Caco-2 (cell line): ENCODE measurements at regions of chr16 and their contacts with region 1.

Region 1: DNA sequence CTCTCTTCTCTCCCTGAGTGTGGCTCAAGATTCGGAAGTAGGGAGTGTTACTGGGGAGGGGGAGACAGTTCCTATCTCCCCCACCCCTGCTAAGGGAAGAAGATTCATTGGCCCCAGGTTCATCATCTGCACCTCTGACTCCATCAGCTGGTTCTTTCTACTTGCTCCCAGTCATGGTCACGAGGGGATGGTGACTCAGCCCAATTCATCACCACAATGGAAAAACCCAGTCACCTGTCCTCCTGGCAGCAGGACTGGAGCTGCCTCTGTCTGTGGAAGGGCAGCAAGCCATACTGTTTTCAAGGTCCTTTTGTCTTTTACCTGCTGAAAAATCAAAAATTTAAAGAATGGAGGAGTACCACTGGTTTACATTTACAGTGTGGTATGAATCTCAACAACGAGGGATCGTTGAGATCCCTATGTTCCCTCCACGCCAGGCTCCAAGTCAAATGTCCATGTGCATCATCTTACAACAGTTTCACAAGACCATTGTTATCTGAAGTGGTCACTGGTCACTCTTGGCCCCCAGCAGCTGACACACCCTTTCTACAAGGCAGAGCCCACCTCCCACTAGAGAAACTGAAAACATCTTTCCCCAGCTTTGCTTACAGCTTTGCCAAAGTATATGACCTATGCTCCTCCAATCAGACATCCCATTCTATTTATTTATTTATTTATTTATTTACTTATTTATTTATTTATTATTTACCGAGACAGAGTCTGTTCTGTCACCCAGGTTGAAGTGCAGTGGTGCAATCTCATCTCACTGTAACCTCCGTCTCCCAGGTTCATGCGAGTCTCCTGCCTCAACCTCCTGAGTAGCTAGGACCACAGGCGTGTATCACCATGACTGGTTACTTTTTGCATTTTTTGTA is 40.4 kb upstream of the NDRG4 start:
- DNase-seq: no peak
- H3K4me3 ChIP-seq: no peak overlapping the region
- H3K4me3 Mint-ChIP-seq: no peak overlapping the region
- H3K27ac Mint-ChIP-seq: no peak overlapping the region
- H3K4me1 ChIP-seq: peaks cover 29% of the 10 kb centered on the region
- H3K4me1 Mint-ChIP-seq: peaks cover 9% of the 10 kb centered on the region
- H3K27me3 ChIP-seq: no peaks in the 10 kb centered on the region; the same call in 1 of the 2 replicates
- H3K27me3 Mint-ChIP-seq: peaks cover 4% of the 10 kb centered on the region
- CTCF ChIP-seq: no peak

Region 2: DNA sequence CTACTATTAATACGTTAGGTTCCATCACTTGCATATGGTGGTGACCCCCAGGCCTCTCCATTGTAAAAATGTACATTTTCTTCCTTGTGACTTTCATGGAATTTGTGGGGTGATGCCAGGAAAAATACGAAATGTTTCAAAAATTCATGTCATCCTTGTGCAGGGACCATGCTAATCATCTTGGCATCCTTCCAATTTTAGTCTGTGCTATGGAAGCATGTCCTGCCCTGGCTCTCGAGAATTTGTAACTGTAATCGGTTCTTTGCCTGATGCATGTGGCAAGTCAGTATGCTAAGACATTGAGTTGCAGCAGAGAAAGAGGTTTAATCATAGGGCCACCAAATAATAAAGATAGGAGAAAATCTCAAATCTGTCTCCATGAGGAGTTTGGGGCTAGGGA is 81.6 kb before region 1 on chr16:
- CTCF ChIA-PET with region 1: no interaction called
- POLR2A ChIA-PET with region 1: no interaction called
- intact Hi-C with region 1: no loop called
- DNase-seq: no peak
- H3K4me3 ChIP-seq: no peak overlapping the region
- H3K4me3 Mint-ChIP-seq: no peak overlapping the region
- H3K27ac Mint-ChIP-seq: no peak overlapping the region
- H3K4me1 ChIP-seq: no peaks in the 10 kb centered on the region
- H3K4me1 Mint-ChIP-seq: no peaks in the 10 kb centered on the region
- H3K27me3 ChIP-seq: no peaks in the 10 kb centered on the region
- H3K27me3 Mint-ChIP-seq: peaks cover 12% of the 10 kb centered on the region
- CTCF ChIP-seq: no peak

Region 3: DNA sequence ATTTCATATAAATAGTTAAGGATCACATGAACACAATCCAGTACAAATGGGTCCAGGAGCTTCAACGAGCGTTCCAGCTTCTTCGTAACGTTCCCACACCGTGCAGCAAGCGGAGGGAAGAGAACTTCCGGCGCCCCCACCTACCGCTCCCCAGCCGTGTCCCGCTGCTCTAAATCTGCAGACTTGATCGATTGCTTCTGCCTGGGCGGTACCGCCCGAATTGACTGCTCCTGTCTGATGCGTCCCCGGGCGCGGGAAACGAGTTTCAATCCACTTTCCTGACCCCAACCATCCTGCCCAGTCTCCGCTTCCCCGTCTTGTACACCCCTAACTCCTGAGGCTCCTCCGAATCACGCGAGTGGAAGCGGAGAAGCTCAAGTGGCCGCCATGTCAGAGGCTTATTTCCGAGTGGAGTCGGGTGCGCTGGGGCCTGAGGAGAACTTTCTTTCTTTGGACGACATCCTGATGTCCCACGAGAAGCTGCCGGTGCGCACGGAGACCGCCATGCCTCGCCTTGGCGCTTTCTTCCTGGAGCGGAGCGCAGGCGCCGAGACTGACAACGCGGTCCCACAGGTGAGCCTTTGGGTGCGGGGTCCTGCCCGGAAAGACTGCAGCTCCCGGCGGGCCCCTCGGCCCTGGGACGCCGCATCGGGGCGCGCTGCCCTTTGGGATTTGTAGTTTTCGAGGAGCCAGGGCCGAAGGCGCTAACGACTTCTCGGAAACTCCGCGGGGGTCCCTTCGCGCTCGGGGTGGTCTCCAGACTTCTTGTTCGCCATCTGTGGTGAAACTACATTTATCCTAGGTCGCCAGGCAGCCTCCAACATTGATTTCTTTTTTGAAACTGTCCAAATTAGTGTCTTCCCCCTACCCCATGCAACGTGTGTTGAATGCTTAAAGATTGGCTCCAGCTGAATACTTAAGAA is 67.1 kb before region 1 on chr16 and contains the start of gene GINS3:
- CTCF ChIA-PET with region 1: no interaction called
- POLR2A ChIA-PET with region 1: no interaction called
- intact Hi-C with region 1: loop called (anchors 5 kb)
- DNase-seq: peak; percentile 95 to 96
- H3K4me3 ChIP-seq: peak within 1 kb of the TSS; percentile 82
- H3K4me3 Mint-ChIP-seq: peak within 1 kb of the TSS; percentile 98
- H3K27ac Mint-ChIP-seq: peak within 1 kb of the TSS; percentile 97
- H3K4me1 ChIP-seq: no peaks in the 10 kb centered on the region
- H3K4me1 Mint-ChIP-seq: no peaks in the 10 kb centered on the region
- H3K27me3 ChIP-seq: no peaks in the 10 kb centered on the region
- H3K27me3 Mint-ChIP-seq: peaks cover 9% of the 10 kb centered on the region
- CTCF ChIP-seq: no peak
- total RNA-seq, gene GINS3: 14.2 and 15.2 TPM in 2 replicates

Region 4: DNA sequence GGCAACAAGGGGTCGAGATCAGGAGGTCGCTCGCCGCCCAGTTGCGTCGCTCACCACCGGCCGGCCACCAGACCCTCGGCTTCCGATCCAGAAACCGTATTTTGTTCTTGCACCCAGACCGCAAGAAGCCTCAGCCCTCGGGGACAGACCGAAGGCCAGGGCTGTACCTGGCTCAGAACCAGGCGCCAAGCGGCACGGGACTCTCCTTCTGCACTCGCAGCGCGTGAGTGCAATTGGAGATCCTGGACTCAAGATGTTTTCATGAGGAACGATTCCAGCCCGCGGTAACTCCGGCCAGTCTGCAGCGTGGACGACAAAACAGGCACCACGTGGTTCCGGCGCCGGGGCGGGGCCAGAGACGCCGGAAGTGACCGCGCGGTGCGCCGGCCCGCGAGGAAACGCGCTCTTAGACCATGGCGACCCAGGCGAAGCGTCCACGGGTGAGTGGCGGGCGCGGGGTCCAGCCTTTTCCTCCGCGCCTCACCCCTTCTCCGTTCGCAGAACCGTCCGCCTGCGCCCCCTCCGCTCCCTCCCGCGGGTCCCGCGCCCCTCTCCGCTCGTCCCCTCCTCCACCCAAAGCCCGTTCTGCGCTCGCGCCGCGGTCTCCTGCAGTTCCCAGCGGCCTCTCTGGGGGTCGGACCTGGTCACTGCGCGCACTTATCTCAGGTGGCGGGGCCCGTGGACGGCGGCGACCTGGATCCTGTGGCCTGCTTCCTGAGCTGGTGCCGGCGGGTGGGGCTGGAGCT is 55.7 kb after region 1 on chr16 and contains the start of gene SETD6:
- CTCF ChIA-PET with region 1: no interaction called
- POLR2A ChIA-PET with region 1: interaction called, 10 read pairs
- intact Hi-C with region 1: no loop called
- DNase-seq: peak; percentile 91 to 95
- H3K4me3 ChIP-seq: peak within 1 kb of the TSS; percentile 88
- H3K4me3 Mint-ChIP-seq: peak within 1 kb of the TSS; percentile 93
- H3K27ac Mint-ChIP-seq: peak within 1 kb of the TSS; percentile 97
- H3K4me1 ChIP-seq: peaks cover 18% of the 10 kb centered on the region
- H3K4me1 Mint-ChIP-seq: peaks cover 43% of the 10 kb centered on the region
- H3K27me3 ChIP-seq: no peaks in the 10 kb centered on the region
- H3K27me3 Mint-ChIP-seq: no peaks in the 10 kb centered on the region
- CTCF ChIP-seq: peak; percentile 16 to 36
- total RNA-seq, gene SETD6: 34.9 and 41.7 TPM in 2 replicates